ENCODE measurements at regions of chr3 and their contacts with region 1.

Region 1: DNA sequence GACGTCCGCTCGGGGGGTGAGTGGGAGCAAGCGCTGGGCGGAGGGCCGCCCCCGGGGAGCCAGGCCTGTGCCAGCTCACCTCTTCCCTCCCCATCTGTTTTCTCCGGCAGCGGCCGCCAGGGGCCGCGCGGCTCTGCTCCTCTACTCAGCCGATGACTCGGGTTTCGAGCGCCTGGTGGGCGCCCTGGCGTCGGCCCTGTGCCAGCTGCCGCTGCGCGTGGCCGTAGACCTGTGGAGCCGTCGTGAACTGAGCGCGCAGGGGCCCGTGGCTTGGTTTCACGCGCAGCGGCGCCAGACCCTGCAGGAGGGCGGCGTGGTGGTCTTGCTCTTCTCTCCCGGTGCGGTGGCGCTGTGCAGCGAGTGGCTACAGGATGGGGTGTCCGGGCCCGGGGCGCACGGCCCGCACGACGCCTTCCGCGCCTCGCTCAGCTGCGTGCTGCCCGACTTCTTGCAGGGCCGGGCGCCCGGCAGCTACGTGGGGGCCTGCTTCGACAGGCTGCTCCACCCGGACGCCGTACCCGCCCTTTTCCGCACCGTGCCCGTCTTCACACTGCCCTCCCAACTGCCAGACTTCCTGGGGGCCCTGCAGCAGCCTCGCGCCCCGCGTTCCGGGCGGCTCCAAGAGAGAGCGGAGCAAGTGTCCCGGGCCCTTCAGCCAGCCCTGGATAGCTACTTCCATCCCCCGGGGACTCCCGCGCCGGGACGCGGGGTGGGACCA is 632 bp upstream of the CRELD1 start:
- DNase-seq: peak; percentile 90 to 94 (median 94)
- H3K4me3 ChIP-seq: peak overlapping the region; percentile 19 to 87 (median 76)
- H3K27ac ChIP-seq: peak overlapping the region; percentile 98 to 99
- H3K4me1 ChIP-seq: peaks cover 5 to 31% (median 26%) of the 10 kb centered on the region in 4 experiments
- H3K27me3 ChIP-seq: no peaks in the 10 kb centered on the region

Region 2: GRCh38 chr3:9884555-9885165 is 48.3 kb before region 1 on chr3:
- CTCF ChIA-PET with region 1: interaction called, 11 read pairs
- POLR2A ChIA-PET with region 1: interaction called, 3 read pairs
- DNase-seq: no peak
- H3K4me3 ChIP-seq: no peak overlapping the region
- H3K27ac ChIP-seq: no peak overlapping the region
- H3K4me1 ChIP-seq: no peaks in the 10 kb centered on the region
- H3K27me3 ChIP-seq: no peaks in the 10 kb centered on the region

Region 3: DNA sequence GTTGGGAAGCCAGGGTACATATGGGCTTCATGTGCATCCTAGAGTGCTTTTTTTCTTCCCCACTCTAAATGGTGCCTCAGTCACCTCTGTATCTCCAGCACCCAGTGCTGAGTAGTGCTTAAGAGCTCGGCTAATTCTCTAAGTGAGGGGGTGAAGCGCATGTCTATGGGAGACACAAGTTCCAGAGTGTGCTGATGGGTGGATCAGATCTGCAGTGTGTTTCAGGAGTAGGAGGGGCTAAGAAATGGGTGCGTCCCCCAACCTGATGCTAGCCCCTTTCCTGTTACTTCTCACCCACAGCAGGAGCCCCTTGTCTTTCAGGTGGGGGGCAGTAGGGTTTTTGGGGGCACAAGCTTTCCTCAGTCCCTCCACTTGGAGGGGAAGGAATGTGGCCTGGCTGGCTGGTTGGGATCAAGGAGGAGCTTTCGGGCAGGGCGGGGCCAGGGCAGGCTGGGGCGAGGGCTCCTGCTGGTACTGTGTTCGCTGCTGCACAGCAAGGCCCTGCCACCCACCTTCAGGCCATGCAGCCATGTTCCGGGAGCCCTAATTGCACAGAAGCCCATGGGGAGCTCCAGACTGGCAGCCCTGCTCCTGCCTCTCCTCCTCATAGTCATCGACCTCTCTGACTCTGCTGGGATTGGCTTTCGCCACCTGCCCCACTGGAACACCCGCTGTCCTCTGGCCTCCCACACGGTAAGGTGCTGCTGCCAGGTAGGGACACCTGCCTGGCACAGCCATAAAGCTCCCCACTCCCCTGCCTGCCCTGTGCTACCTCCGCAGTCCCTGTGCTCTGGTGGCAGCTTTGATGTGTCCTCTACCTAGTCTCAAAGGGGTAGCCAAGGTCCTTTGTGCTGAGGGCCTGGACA is 30.4 kb before region 1 on chr3 and contains the start of gene IL17RE:
- CTCF ChIA-PET with region 1: interaction called, 12 read pairs
- POLR2A ChIA-PET with region 1: interaction called, 3 read pairs
- DNase-seq: no peak
- H3K4me3 ChIP-seq: peak within 1 kb of the TSS in 6 of 7 experiments; percentile 1 to 53 (median 22)
- H3K27ac ChIP-seq: no peak within 1 kb of the TSS
- H3K4me1 ChIP-seq: peaks cover 7 to 64% (median 48%) of the 10 kb centered on the region in 4 experiments
- H3K27me3 ChIP-seq: no peaks in the 10 kb centered on the region

Region 4: DNA sequence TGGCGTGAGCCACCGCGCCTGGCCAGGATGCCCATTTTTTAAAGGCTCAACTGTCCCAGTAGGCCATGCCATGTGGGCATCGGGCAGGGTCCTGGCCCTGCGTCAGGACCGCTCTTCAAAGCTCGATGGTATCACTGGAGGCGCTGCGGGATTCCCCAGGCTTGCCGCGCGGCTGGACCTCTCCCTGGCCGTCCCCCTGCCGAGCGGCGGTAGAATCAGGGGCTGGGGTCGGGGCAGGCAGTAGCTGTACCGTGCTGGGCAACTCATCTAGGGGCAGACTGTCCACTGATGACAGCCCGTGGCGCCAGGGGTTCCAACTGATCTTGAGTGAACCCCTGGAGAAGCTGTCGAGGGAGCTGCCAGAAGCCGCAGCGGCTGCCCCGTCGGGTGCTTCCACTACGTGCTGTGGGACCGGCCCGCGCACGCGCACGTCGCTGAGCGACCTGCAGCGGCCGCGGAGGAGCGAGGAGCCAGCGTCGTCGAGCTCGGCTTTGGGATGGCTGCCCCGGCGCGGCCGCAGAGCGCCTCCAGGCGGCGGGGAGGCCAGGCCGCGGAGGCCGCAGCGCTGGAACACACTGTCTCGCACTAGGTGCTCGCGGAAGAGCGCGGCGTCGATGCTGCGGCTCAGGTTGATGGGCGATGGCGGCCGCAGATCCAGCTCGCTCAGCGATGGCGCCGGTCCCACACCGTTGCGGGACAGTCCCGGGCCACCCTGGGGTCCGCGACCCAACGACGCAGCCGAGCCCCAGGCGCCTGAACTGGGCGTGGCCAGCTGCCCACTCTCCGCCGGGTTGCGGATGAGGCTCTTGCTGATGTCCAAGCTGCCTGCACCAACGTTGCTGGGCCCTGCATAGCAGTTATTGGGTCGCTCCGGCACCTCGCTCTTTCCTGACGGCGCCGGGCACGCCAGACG is 13.4 kb after region 1 on chr3:
- CTCF ChIA-PET with region 1: interaction called, 19 read pairs
- POLR2A ChIA-PET with region 1: interaction called, 21 read pairs
- DNase-seq: peak; percentile 87 to 94 (median 93)
- H3K4me3 ChIP-seq: peak overlapping the region; percentile 19 to 71 (median 49)
- H3K27ac ChIP-seq: peak overlapping the region in 1 of 2 experiments; percentile 34
- H3K4me1 ChIP-seq: peaks cover 8 to 31% (median 13%) of the 10 kb centered on the region in 4 experiments
- H3K27me3 ChIP-seq: no peaks in the 10 kb centered on the region

Region 5: DNA sequence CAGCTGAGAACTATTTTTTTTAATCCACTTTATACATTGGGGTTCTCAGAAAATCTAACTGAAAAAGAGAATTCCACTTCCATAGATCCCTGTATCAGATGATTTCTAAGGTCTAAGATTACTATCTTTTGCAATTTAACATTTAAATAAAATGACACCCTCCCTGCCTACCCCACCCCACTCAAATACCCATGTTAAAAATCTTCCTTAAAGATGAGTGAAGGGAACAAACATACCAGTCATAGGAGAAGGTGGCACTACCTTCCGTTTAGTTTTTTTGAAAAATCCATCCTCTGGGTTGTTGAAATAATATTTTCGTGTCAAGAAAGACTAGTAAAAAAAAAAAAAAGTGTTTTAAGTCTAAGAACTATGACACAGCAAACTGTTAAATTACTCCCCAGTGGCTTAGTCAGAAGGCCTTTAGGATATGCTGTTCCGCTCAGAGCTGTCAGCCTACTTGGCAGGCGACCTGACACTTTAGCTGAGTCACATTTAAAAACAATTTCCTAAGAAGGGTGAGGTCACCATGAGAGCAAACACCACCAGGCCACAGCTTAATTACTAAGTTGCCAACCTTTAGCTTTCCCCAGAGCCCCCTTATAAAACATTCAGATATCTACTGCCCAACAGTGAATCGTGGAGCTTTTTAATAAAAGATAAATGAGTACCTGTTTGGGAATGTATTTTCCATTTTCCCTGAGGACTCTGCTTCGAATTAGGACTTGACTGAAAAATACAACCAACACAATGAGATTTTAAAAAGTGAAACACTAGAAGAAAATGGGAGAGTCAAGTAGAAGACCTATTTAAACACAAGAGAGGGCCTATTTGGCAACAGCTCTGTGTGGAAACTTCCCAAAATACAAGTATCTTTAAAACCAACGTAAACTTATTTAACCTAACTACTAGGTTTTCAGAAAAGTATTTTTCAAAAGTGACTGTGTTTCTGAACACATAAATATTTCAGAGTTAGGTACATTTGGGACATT is 44.0 kb after region 1 on chr3:
- CTCF ChIA-PET with region 1: interaction called, 6 read pairs
- POLR2A ChIA-PET with region 1: interaction called, 16 read pairs
- DNase-seq: peak; percentile 97 to 99 (median 99)
- H3K4me3 ChIP-seq: no peak overlapping the region
- H3K27ac ChIP-seq: peak overlapping the region; percentile 95 to 98
- H3K4me1 ChIP-seq: peaks cover 0 to 17% (median 12%) of the 10 kb centered on the region in 4 experiments
- H3K27me3 ChIP-seq: no peaks in the 10 kb centered on the region

Measured in common myeloid progenitor, CD34-positive (primary cell).